PC-3 (cell line): ENCODE measurements at regions of chr2 and their contacts with region 1.

Region 1: GRCh38 chr2:33518926-33519325 is 42.5 kb downstream of the RASGRP3 start:
- DNase-seq: peak; percentile 80
- ATAC-seq: peak; percentile 99
- H3K4me3 ChIP-seq: no peak overlapping the region
- H3K27ac ChIP-seq: peak overlapping the region; percentile 52
- H3K4me1 ChIP-seq: peaks cover 13% of the 10 kb centered on the region
- H3K27me3 ChIP-seq: no peaks in the 10 kb centered on the region
- CTCF ChIP-seq: no peak

Region 2: GRCh38 chr2:33291278-33292013 is 227.5 kb before region 1 on chr2:
- CTCF ChIA-PET with region 1: no interaction called
- POLR2A ChIA-PET with region 1: no interaction called
- intact Hi-C with region 1: no loop called
- DNase-seq: peak; percentile 92
- ATAC-seq: peak; percentile 96
- H3K4me3 ChIP-seq: peak overlapping the region; percentile 44
- H3K27ac ChIP-seq: peak overlapping the region; percentile 91
- H3K4me1 ChIP-seq: peaks cover 26% of the 10 kb centered on the region
- H3K27me3 ChIP-seq: no peaks in the 10 kb centered on the region
- CTCF ChIP-seq: no peak

Region 3: DNA sequence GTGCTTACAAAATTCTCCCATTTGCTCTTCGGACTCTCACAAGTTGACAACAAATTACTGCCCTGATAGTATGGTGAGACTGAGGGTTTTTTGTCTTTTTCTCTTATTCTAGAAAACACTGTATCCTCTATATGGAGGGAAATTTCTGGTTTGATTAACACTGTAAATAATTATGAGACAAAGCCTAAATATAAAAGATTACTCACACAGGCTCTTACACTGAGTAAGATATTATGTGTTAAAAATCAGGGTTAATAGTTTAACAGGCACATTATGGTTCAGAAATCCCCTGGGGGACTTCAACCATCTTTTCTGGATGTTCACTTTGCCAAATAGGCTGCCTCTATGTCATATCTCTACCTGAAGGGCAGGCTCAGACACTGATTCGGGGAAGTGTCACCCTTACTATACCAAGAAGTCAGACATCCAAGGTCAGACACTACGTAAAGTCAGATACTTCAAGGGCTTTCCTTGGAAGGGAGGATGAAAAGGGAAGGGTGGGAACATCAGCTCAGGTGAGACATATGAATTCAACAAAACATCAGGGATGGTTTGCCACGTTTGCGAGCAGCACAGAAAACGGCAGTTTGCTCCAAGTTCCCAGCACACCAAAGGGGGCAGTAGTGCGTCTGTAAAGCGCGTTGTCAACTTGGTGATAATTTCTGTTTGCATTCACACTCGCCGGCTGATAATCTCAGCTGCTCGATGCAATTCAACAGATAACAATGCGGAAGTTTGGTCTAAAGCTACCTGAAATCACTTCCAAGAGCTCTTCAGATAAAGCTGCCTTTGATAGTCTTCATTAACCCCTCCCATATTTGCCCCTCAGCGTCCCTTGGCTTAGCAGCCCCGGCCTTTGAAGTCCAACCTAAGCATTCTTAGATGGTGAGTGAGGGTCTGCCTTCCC is 43.4 kb before region 1 on chr2:
- CTCF ChIA-PET with region 1: no interaction called
- POLR2A ChIA-PET with region 1: interaction called, 6 read pairs
- intact Hi-C with region 1: loop called (anchors 2 kb)
- DNase-seq: peak; percentile 80
- ATAC-seq: peak; percentile 78
- H3K4me3 ChIP-seq: peak overlapping the region; percentile 84
- H3K27ac ChIP-seq: peak overlapping the region; percentile 53
- H3K4me1 ChIP-seq: peaks cover 10% of the 10 kb centered on the region; the same call in 1 of the 2 replicates
- H3K27me3 ChIP-seq: no peaks in the 10 kb centered on the region
- CTCF ChIP-seq: peak; percentile 90

Region 4: GRCh38 chr2:33552758-33553461 is 34.0 kb after region 1 on chr2:
- CTCF ChIA-PET with region 1: no interaction called
- POLR2A ChIA-PET with region 1: no interaction called
- intact Hi-C with region 1: no loop called
- DNase-seq: peak; percentile 43
- ATAC-seq: peak; percentile 67
- H3K4me3 ChIP-seq: no peak overlapping the region
- H3K27ac ChIP-seq: no peak overlapping the region
- H3K4me1 ChIP-seq: peaks cover 7% of the 10 kb centered on the region
- H3K27me3 ChIP-seq: no peaks in the 10 kb centered on the region
- CTCF ChIP-seq: no peak